ENCODE measurements at regions of chr12 and their contacts with region 1.

Region 1: DNA sequence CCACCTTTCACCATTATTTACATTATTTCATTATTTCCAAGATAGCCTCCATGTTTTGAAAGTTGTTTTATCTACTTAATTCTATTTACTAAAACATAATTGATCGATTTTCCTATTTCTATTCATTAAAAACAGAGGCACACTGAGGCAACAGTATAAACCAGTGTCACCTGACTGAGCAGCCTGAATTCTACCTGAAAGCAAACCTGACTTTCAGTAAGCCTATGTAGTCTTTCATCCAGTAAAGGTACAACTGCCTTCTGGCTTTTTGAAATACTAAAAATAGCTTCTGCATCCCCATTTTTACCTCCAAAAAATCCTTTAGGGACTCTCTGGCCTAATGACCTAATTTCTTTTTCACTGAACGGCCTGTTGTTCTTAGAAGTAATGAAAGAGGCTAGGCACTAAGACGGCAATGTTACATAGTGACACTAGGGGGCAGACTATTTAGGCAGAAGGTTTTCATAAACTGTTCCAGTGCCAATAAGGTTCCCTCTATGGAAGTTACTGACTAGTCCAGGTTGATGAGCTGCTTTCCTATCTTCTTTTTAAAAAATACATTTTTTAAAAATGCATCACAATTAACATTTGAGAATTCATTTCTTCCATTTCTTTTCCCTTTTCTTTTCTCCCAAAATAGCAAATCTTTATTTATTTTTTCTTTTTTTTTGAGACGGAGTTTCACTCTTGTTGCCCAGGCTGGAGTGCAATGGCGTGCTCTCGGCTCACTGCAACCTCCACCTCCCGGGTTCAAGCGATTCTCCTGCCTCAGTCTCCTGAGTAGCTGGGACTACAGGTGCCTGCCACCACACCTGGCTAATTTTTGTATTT is 17.5 kb downstream of the ANAPC5 start:
- DNase-seq: peak in 1 of 2 donors; percentile 26
- ATAC-seq: peak in 7 of 8 donors; percentile 58 to 85 (median 70)
- H3K4me3 ChIP-seq: no peak overlapping the region
- H3K27ac ChIP-seq: no peak overlapping the region
- H3K4me1 ChIP-seq: peaks cover 0 to 6% (median 0%) of the 10 kb centered on the region in 9 donors
- H3K27me3 ChIP-seq: no peaks in the 10 kb centered on the region
- CTCF ChIP-seq: peak; percentile 69 to 90 (median 86)

Region 2: GRCh38 chr12:121132601-121133481 is 201.9 kb before region 1 on chr12 and contains the start of gene P2RX7:
- intact Hi-C with region 1: no loop called
- DNase-seq: peak; percentile 73 to 76
- ATAC-seq: peak; percentile 62 to 87 (median 74)
- H3K4me3 ChIP-seq: peak within 1 kb of the TSS in 9 of 10 donors; percentile 31 to 62 (median 54)
- H3K27ac ChIP-seq: peak within 1 kb of the TSS; percentile 17 to 82 (median 61)
- H3K4me1 ChIP-seq: peaks cover 2 to 52% (median 34%) of the 10 kb centered on the region in 9 donors
- H3K27me3 ChIP-seq: no peaks in the 10 kb centered on the region
- CTCF ChIP-seq: peak in 1 of 9 donors; percentile 6
- total RNA-seq, gene P2RX7: 0.52 to 7.0 (median 1.6) TPM

Region 3: DNA sequence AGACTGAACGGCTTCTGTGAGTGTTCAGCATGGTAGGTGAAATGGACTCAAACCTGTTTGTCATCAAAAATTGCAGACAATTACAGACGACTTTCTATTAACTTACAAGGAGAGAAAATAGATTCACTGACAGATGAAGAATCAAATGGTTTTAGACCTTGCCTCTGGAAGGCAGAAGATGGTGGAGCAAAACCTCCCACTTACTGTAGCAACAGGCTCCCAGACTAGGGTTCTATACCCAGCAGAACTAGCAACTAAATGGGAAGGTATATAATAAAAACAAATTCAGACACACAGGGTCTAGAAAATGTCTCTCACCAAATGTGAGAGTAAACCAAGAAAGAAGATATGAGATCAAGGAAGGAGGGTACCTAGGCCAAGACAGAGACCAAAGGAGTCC is 102.0 kb after region 1 on chr12:
- intact Hi-C with region 1: loop called in 5 of 10 experiments (anchors 2 to 5 kb)
- DNase-seq: no peak
- ATAC-seq: no peak
- H3K4me3 ChIP-seq: no peak overlapping the region
- H3K27ac ChIP-seq: no peak overlapping the region
- H3K4me1 ChIP-seq: no peaks in the 10 kb centered on the region
- H3K27me3 ChIP-seq: no peaks in the 10 kb centered on the region
- CTCF ChIP-seq: no peak

Region 4: DNA sequence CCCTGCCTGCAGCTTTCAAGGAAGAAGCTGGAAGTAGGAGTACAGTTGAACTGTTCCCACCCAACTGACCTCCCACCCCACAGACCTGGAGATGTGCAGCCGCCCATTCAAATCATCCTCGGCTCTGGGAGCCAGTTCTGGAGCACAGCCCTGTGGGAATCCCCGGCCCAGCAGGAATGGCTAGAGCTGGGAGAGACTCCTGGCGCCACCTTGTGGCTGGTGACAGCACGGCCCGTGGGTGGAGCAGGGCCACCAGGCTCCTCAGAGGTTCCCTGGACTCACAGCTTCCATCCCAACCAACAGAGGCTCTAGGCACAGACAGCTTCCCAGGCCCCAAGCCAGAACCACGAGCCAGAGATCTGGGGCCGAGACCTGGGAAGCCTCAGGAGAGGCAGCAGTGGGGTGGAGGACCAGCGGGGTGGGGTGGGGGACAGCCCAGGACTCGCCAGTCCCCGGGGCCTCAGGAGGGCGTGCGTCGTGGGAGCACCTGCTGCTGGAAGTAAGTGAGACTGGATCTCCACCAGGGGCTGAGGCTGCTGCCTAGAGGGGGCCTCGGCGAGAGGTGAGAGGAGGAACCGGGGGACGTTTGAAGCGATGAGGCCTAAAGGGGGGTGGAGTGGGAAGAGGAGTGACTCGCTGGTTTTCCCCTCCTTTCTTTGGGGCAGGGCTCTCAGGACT is 108.6 kb after region 1 on chr12:
- intact Hi-C with region 1: loop called in 9 of 10 experiments (anchors 1 to 5 kb)
- DNase-seq: peak; percentile 80 to 87
- ATAC-seq: peak; percentile 89 to 95 (median 92)
- H3K4me3 ChIP-seq: no peak overlapping the region
- H3K27ac ChIP-seq: no peak overlapping the region
- H3K4me1 ChIP-seq: peaks cover 0 to 10% (median 0%) of the 10 kb centered on the region in 9 donors
- H3K27me3 ChIP-seq: no peaks in the 10 kb centered on the region
- CTCF ChIP-seq: peak; percentile 68 to 93 (median 87)

Measured in heart right ventricle (tissue), 16 donors.